IMR-90 (cell line): ENCODE measurements at regions of chr5 and their contacts with region 1.

Region 1: DNA sequence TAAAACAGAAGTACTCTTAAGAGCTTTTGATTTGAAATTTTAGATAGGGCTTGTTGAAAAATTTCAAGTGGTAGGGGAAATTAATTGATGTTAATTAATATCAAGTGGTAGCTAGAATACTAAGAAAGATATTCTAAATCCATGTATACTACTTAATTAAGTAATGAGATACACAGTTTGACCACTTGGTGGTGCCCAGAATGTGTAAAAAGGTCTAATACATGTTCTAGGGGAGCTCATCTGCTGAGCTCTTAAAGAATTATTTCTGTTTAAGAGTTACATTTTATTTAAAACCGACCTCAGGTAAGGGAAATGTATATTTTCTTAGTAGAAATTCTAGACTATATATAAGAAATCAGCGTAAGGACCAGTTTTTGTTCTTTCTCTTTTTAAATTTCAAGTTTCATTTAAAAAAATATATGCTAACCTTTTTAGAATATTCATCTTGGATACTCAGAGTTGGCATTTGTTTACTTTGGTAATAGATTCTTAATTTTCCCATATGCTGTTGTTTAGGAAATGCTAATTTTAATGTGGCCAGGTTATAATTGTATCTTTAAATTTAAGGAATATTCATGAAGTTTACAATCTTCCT is 61.5 kb downstream of the LNPEP start:
- DNase-seq: peak; percentile 63
- ATAC-seq: peak; percentile 82
- H3K4me3 ChIP-seq: no peak overlapping the region
- H3K27ac ChIP-seq: no peak overlapping the region
- H3K4me1 ChIP-seq: peaks cover 3% of the 10 kb centered on the region; the same call in 1 of the 2 replicates
- H3K27me3 ChIP-seq: no peaks in the 10 kb centered on the region
- CTCF ChIP-seq: peak; percentile 52
- POLR2A ChIP-seq: no peak
- RAD21 ChIP-seq: peak; percentile 48

Region 2: DNA sequence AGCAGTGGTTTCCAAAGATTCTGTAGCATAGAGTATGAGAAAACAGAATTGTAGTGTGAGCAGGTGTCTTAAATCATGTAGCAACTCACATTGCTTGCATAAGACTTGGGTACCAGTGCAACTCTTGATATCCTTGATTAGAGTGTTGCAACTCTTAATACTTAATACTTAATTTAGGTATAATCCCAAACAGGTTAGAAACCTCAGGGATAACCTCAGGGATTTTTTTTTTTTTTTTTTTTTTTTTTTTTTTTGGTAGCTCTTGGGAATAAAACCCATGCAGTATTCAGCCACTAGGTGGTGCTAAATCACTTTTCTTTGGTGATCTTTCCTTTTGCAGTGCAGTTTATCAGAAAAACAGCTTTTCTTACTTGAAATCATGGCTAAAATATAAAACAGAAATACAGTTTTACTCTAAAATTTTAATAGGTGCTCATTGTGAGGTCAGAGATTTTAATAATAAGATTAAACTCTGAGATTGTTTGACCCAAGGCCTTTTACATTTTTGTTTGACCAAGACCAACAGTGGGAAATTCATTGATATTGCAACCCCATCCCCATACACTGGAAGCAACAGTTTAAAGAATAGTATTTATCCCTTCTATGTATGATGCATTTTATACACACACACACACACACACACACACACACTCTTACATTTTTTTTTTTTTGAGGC is 244.9 kb before region 1 on chr5:
- CTCF ChIA-PET with region 1: interaction called, 4 read pairs
- POLR2A ChIA-PET with region 1: no interaction called
- dilution Hi-C with region 1: no loop called
- in situ Hi-C with region 1: no loop called
- intact Hi-C with region 1: loop called (anchors 10 kb)
- DNase-seq: peak; percentile 69
- ATAC-seq: peak; percentile 44; the same call in 1 of the 2 replicates
- H3K4me3 ChIP-seq: no peak overlapping the region
- H3K27ac ChIP-seq: no peak overlapping the region
- H3K4me1 ChIP-seq: peaks cover 1% of the 10 kb centered on the region
- H3K27me3 ChIP-seq: no peaks in the 10 kb centered on the region
- CTCF ChIP-seq: peak; percentile 76
- POLR2A ChIP-seq: no peak
- RAD21 ChIP-seq: peak; percentile 68

Region 3: DNA sequence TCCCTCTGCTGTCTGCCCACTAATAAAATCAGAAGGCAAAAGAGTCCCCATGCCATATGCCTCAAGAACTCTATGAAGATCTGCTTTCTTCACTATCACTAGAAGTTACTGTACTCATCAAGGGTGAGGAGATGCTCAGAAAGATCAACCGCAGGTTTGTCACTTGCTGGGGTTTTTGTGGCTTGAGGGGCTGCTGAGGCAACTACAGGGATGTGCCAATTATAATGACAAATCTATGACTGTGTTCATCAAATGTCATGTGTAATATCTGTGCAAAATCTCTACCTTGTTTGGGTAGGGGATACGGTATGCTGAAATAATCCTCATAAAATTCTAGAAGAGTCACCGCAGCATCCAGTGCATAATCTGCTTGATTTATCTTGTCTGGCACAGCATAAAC is 202.6 kb before region 1 on chr5:
- CTCF ChIA-PET with region 1: no interaction called
- POLR2A ChIA-PET with region 1: no interaction called
- dilution Hi-C with region 1: no loop called
- in situ Hi-C with region 1: no loop called
- intact Hi-C with region 1: no loop called
- DNase-seq: no peak
- ATAC-seq: no peak
- H3K4me3 ChIP-seq: no peak overlapping the region
- H3K27ac ChIP-seq: no peak overlapping the region
- H3K4me1 ChIP-seq: peaks cover 5% of the 10 kb centered on the region
- H3K27me3 ChIP-seq: no peaks in the 10 kb centered on the region
- CTCF ChIP-seq: no peak
- POLR2A ChIP-seq: no peak
- RAD21 ChIP-seq: no peak

Region 4: GRCh38 chr5:97142521-97143254 is 145.3 kb after region 1 on chr5 and contains the start of gene LIX1:
- CTCF ChIA-PET with region 1: interaction called, 11 read pairs
- POLR2A ChIA-PET with region 1: no interaction called
- dilution Hi-C with region 1: no loop called
- in situ Hi-C with region 1: no loop called
- intact Hi-C with region 1: loop called (anchors 2 kb)
- DNase-seq: peak; percentile 36
- ATAC-seq: peak; percentile 94
- H3K4me3 ChIP-seq: no peak within 1 kb of the TSS
- H3K27ac ChIP-seq: no peak within 1 kb of the TSS
- H3K4me1 ChIP-seq: no peaks in the 10 kb centered on the region
- H3K27me3 ChIP-seq: peaks cover 23% of the 10 kb centered on the region
- CTCF ChIP-seq: peak; percentile 61
- POLR2A ChIP-seq: no peak
- RAD21 ChIP-seq: peak; percentile 68
- total RNA-seq, gene LIX1: not detected in 2 replicates

Region 5: DNA sequence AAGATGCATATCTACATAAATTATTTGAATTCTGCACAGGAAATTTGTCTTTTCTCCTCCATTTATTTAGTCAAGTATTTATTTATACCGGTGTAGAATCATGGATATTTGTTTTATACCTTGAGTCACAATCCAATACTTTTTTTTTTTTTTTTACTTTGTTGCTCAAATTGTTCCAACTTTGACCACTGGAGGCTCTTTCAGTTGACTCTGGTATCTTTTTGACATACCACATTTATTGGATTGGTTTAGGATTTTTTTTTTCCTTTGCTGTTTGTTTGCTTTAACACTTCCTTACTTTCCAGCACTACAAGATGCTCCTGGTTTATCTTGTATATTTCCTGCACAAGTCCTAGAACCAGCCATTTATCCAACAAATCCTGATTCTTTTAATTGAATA is 728.7 kb after region 1 on chr5:
- CTCF ChIA-PET with region 1: no interaction called
- POLR2A ChIA-PET with region 1: no interaction called
- dilution Hi-C with region 1: no loop called
- in situ Hi-C with region 1: no loop called
- intact Hi-C with region 1: no loop called
- DNase-seq: no peak
- ATAC-seq: no peak
- H3K4me3 ChIP-seq: no peak overlapping the region
- H3K27ac ChIP-seq: no peak overlapping the region
- H3K4me1 ChIP-seq: no peaks in the 10 kb centered on the region
- H3K27me3 ChIP-seq: no peaks in the 10 kb centered on the region
- CTCF ChIP-seq: no peak
- POLR2A ChIP-seq: no peak
- RAD21 ChIP-seq: no peak